KBM-7 (cell line): ENCODE measurements at regions of chr7 and their contacts with region 1.

Region 1: DNA sequence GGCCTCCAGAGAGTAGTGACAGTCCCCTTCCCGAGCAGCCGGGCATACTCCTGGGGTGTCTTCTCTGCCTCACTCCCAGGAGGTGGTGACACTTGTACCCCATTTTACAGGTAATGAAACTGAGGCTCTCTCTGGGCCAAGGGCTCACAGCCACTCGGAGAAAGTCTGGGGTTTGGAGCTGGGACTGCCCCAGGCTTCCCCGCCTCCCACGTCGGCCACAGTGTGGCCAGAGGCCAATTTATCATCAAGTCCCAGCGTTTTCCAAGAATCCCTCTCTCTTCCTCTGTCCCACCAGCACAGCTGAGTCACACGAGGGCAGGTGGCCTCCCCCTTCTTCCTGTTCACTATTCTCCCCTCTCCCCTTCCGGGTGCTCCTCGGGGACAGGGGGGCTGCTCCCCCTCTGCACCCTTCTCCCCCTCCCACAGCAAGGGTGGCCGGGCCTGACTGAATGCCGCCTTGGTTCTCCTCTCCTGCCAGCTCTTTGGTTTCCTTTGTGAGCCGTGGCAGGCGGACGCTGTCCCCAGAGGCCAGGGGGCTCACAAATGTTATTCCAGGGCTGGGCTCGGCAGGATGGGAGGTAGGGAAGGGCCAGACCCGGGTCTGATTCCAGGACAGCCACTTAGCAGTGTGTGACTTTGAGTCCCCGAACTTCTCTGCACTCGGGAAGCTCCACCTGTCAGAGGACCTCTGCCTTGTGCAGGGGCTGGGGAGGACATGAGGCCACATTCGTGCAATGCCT is 17.7 kb downstream of the CLIP2 start:
- DNase-seq: peak; percentile 40

Region 2: GRCh38 chr7:74371381-74372341 is 64.8 kb after region 1 on chr7:
- in situ Hi-C with region 1: loop called (anchors 10 kb)
- DNase-seq: no peak

Region 3: GRCh38 chr7:74514131-74514591 is 207.3 kb after region 1 on chr7:
- in situ Hi-C with region 1: no loop called
- DNase-seq: no peak